Sigmoid colon (tissue), 7 donors: ENCODE measurements at regions of chr10 and their contacts with region 1.

Region 1: DNA sequence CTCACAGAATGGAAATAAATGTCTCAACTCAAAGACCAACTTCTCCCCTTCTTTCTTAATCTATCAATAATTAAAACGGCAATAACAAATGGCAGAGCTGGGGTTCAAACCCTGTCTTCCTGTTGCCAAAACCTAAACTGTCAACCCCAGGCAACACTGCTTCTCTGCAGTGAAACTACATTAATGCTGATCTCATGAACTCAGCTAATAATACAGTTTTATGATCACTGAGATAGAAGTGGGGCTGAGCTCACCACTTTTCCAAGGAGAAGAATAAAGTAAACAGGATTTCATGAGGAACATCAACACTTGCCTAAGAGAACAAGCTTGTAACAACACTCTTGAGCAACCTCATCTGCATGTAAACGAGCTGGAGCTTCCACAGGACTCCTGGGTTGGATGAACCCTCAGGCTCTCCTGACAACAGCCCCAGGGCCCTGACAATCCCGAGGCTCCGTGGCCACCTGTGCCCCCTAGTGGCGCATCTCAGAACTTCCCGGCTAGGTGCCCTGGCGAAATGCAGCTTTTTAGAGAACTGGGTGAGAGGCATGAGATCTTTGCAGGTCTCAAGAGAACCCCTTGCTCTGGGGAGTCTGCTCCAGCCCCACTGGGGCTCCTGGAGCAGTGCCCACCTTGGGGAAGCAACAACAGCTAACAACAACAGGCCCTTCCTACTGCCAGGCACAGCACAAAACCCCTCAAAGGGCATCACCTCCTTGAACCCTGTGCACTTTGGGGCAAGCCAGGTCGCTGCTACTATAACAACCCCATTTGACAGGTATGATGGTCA is 169.3 kb downstream of the SH3PXD2A start:
- DNase-seq: peak; percentile 94
- H3K4me3 ChIP-seq: no peak overlapping the region
- H3K27ac ChIP-seq: peak overlapping the region; percentile 8 to 63 (median 35)
- H3K4me1 ChIP-seq: peaks cover 0 to 14% (median 3%) of the 10 kb centered on the region in 4 donors
- H3K27me3 ChIP-seq: no peaks in the 10 kb centered on the region
- CTCF ChIP-seq: peak; percentile 95 to 99 (median 96)
- EP300 ChIP-seq: no peak
- POLR2A ChIP-seq: no peak

Region 2: GRCh38 chr10:103598654-103599115 is 87.4 kb before region 1 on chr10:
- intact Hi-C with region 1: loop called (anchors 1 kb)
- DNase-seq: no peak
- H3K4me3 ChIP-seq: no peak overlapping the region
- H3K27ac ChIP-seq: peak overlapping the region in 1 of 4 donors; percentile 19
- H3K4me1 ChIP-seq: peaks cover 0 to 13% (median 4%) of the 10 kb centered on the region in 4 donors
- H3K27me3 ChIP-seq: no peaks in the 10 kb centered on the region
- CTCF ChIP-seq: peak; percentile 50 to 70 (median 60)
- EP300 ChIP-seq: no peak
- POLR2A ChIP-seq: no peak

Region 3: GRCh38 chr10:103637927-103638557 is 48.0 kb before region 1 on chr10:
- intact Hi-C with region 1: loop called (anchors 1 kb)
- DNase-seq: peak; percentile 94
- H3K4me3 ChIP-seq: no peak overlapping the region
- H3K27ac ChIP-seq: peak overlapping the region; percentile 71 to 92 (median 88)
- H3K4me1 ChIP-seq: peaks cover 0 to 69% (median 50%) of the 10 kb centered on the region in 4 donors
- H3K27me3 ChIP-seq: no peaks in the 10 kb centered on the region
- CTCF ChIP-seq: no peak
- EP300 ChIP-seq: no peak
- POLR2A ChIP-seq: no peak